CD8-positive, alpha-beta T cell (primary cell): ENCODE measurements at regions of chr17 and their contacts with region 1.

Region 1: GRCh38 chr17:73231841-73232586 is 29.7 kb downstream of the CPSF4L start:
- DNase-seq: peak; percentile 93 to 99 (median 96)
- ATAC-seq: peak; percentile 95
- H3K4me3 ChIP-seq: peak overlapping the region; percentile 95 to 100
- H3K4me3 Mint-ChIP-seq: peak overlapping the region; percentile 97
- H3K27ac ChIP-seq: peak overlapping the region; percentile 75 to 84
- H3K27ac Mint-ChIP-seq: peak overlapping the region; percentile 98
- H3K4me1 ChIP-seq: peaks cover 46% of the 10 kb centered on the region
- H3K4me1 Mint-ChIP-seq: peaks cover 71% of the 10 kb centered on the region
- H3K27me3 ChIP-seq: no peaks in the 10 kb centered on the region
- H3K27me3 Mint-ChIP-seq: no peaks in the 10 kb centered on the region
- CTCF ChIP-seq: no peak

Region 2: DNA sequence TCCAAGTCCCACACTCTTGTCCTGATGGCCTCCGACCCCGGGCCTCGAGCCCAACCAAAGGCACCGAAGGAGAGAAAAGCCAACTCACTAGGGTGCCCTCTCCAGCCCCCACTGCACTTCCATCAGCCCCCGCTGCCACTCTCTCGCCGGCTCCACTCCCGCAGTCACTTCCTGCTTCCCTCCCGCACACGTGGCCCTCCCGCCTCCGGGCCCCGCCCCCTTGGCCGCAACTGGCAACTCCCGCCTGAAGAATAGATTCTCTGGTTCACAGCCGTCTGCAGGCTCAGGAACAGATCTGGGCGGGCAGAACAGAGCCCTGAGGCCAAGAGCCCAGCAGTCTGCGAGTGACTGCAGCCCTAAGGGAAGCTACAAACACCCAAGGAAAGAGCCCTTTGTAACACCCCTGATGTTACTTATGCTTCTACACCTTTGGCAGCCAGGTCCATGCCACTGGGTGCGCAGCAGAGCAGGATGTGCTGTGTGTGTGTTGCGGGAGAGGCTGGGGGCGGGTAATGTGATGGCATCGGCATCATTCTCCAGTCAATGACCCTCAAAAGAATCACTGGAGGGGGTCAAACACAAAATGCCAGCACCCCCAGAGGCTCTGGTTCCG is 139.4 kb before region 1 on chr17 and contains the start of gene SLC39A11:
- CTCF ChIA-PET with region 1: no interaction called
- POLR2A ChIA-PET with region 1: no interaction called
- intact Hi-C with region 1: loop called (anchors 2 to 5 kb)
- DNase-seq: peak; percentile 72 to 95 (median 89)
- ATAC-seq: peak; percentile 95
- H3K4me3 ChIP-seq: peak within 1 kb of the TSS; percentile 73 to 74
- H3K4me3 Mint-ChIP-seq: peak within 1 kb of the TSS; percentile 98
- H3K27ac ChIP-seq: peak within 1 kb of the TSS; percentile 41 to 58
- H3K27ac Mint-ChIP-seq: peak within 1 kb of the TSS; percentile 94
- H3K4me1 ChIP-seq: peaks cover 17% of the 10 kb centered on the region
- H3K4me1 Mint-ChIP-seq: peaks cover 33% of the 10 kb centered on the region
- H3K27me3 ChIP-seq: no peaks in the 10 kb centered on the region
- H3K27me3 Mint-ChIP-seq: no peaks in the 10 kb centered on the region
- CTCF ChIP-seq: no peak
- total RNA-seq, gene SLC39A11: 8.4 TPM

Region 3: DNA sequence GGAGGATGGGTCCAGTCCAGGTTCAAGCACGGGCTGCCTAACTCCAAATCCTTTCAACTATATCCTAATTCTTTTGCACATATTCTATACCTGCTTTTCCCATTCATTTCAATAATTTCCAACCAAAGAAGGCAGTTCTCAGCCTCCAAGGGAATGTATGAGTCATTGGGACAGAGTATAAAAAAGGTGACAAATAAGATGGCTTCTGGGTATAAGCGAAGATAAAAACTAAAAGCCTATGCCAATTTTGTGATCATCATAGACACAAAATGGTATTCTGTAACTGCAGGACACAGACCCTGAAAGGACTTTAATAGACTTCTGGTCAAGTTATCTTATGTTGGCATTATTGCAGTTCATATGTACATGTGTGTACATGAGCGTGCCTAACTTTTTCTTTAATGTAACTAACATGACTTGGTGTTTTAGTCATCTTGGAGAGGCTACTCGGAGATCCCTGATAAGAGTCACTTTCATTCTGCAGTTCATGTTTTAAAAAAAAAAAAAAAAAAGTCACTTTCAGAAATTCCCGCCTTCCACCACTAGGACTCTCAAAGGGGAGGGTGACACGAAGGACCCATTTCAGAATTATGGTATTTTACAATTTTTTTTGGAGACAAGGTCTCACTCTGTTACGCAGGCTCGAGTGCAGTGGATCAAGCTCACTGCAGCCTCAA is 21.9 kb before region 1 on chr17:
- CTCF ChIA-PET with region 1: interaction called, 8 read pairs
- POLR2A ChIA-PET with region 1: interaction called, 20 read pairs
- intact Hi-C with region 1: loop called (anchors 1 kb)
- DNase-seq: peak in 2 of 9 experiments; percentile 37 to 54
- ATAC-seq: peak; percentile 18
- H3K4me3 ChIP-seq: no peak overlapping the region
- H3K4me3 Mint-ChIP-seq: no peak overlapping the region
- H3K27ac ChIP-seq: no peak overlapping the region
- H3K27ac Mint-ChIP-seq: peak overlapping the region; percentile 55
- H3K4me1 ChIP-seq: peaks cover 20% of the 10 kb centered on the region
- H3K4me1 Mint-ChIP-seq: peaks cover 31% of the 10 kb centered on the region
- H3K27me3 ChIP-seq: no peaks in the 10 kb centered on the region
- H3K27me3 Mint-ChIP-seq: no peaks in the 10 kb centered on the region
- CTCF ChIP-seq: no peak

Region 4: DNA sequence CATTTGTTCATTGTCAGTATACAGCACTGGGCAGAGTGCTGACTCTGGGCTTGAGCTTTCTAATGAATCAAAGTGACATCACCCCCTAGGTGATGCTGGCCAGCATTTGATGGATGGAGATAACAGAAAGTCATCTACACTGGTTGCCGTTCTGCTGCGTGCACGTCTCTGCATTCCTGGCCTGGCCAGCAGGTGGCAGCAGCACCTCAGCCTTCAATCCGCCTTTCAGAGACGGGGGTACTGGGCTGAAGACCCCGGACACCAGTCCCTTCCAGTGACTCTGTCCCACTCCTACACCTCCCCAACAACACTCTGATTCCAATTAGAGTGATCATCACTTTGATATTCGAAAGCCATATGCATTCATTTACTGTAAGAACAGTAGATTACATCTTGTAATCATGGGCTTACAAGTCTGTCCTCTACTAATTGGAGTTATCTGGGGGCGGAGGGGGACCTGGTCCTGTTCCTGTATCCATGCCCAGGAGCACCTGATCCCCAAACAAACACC is 23.7 kb after region 1 on chr17:
- CTCF ChIA-PET with region 1: interaction called, 15 read pairs
- POLR2A ChIA-PET with region 1: no interaction called
- intact Hi-C with region 1: no loop called
- DNase-seq: peak; percentile 18 to 74 (median 59)
- ATAC-seq: peak; percentile 74
- H3K4me3 ChIP-seq: no peak overlapping the region
- H3K4me3 Mint-ChIP-seq: no peak overlapping the region
- H3K27ac ChIP-seq: no peak overlapping the region
- H3K27ac Mint-ChIP-seq: no peak overlapping the region
- H3K4me1 ChIP-seq: no peaks in the 10 kb centered on the region
- H3K4me1 Mint-ChIP-seq: peaks cover 4% of the 10 kb centered on the region
- H3K27me3 ChIP-seq: no peaks in the 10 kb centered on the region
- H3K27me3 Mint-ChIP-seq: peaks cover 2% of the 10 kb centered on the region
- CTCF ChIP-seq: peak; percentile 98

Region 5: GRCh38 chr17:73267648-73268537 is 35.9 kb after region 1 on chr17:
- CTCF ChIA-PET with region 1: no interaction called
- POLR2A ChIA-PET with region 1: no interaction called
- intact Hi-C with region 1: no loop called
- DNase-seq: no peak
- ATAC-seq: no peak
- H3K4me3 ChIP-seq: no peak overlapping the region
- H3K4me3 Mint-ChIP-seq: no peak overlapping the region
- H3K27ac ChIP-seq: no peak overlapping the region
- H3K27ac Mint-ChIP-seq: no peak overlapping the region
- H3K4me1 ChIP-seq: no peaks in the 10 kb centered on the region
- H3K4me1 Mint-ChIP-seq: no peaks in the 10 kb centered on the region
- H3K27me3 ChIP-seq: no peaks in the 10 kb centered on the region
- H3K27me3 Mint-ChIP-seq: no peaks in the 10 kb centered on the region
- CTCF ChIP-seq: no peak

Region 6: GRCh38 chr17:74203439-74204240 is 971.6 kb after region 1 on chr17 and contains the start of gene RPL38:
- CTCF ChIA-PET with region 1: no interaction called
- POLR2A ChIA-PET with region 1: no interaction called
- intact Hi-C with region 1: loop called in 1 of 2 experiments (anchors 1 kb)
- DNase-seq: peak; percentile 87 to 98 (median 95)
- ATAC-seq: peak; percentile 93
- H3K4me3 ChIP-seq: peak within 1 kb of the TSS; percentile 96 to 100
- H3K4me3 Mint-ChIP-seq: peak within 1 kb of the TSS; percentile 99
- H3K27ac ChIP-seq: peak within 1 kb of the TSS; percentile 84 to 93
- H3K27ac Mint-ChIP-seq: peak within 1 kb of the TSS; percentile 97
- H3K4me1 ChIP-seq: peaks cover 36% of the 10 kb centered on the region
- H3K4me1 Mint-ChIP-seq: peaks cover 45% of the 10 kb centered on the region
- H3K27me3 ChIP-seq: peaks cover 0 to 7% of the 10 kb centered on the region in 2 experiments
- H3K27me3 Mint-ChIP-seq: peaks cover 12% of the 10 kb centered on the region
- CTCF ChIP-seq: peak; percentile 78
- total RNA-seq, gene RPL38: 2,036 to 2,081 TPM